GM12878 (cell line): ENCODE measurements at regions of chr6 and their contacts with region 1.

Region 1: GRCh38 chr6:130322673-130323268 is 43.0 kb upstream of the TMEM200A start:
- DNase-seq: peak; percentile 17
- ATAC-seq: peak; percentile 79
- H3K4me3 ChIP-seq: no peak overlapping the region
- H3K27ac ChIP-seq: no peak overlapping the region
- H3K4me1 ChIP-seq: no peaks in the 10 kb centered on the region
- H3K27me3 ChIP-seq: no peaks in the 10 kb centered on the region
- CTCF ChIP-seq: peak; percentile 78 to 93 (median 86); a peak in 5 of 6 replicates
- EP300 ChIP-seq: no peak
- POLR2A ChIP-seq: no peak
- RAD21 ChIP-seq: peak; percentile 95

Region 2: DNA sequence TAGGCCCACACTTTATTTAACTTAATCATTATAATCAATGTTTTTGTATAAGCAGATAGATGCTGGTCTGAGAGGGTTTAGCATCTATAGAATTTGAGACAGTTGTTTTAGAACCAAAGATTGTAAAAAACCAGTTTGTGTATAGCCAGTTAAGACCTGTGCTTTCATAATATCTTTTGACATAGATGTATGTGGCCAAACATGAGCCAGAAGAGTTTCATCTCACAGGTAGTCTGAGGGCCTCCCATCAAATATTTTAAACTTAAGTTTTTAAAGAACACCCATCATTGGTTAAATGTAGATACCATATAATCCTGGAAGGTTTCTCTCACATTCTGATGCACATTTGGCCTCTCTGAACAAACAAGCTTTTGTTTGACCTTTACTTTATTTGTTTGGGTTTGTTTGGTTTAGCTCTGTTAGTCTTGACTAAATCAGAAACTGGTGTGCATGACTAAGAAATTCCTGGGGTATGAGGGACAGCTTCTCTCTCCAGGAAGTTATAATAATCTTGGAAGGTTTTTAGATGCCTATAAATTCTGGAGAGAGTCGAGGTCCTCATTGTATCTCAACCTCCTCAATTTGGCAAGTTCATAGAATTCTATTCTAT is 14.9 kb before region 1 on chr6:
- CTCF ChIA-PET with region 1: interaction called, 10 read pairs
- POLR2A ChIA-PET with region 1: interaction called, 3 read pairs
- RAD21 ChIA-PET with region 1: interaction called, 5 read pairs
- SMC1A ChIA-PET with region 1: interaction called, 5 read pairs
- in situ Hi-C with region 1: no loop called
- intact Hi-C with region 1: no loop called
- DNase-seq: no peak
- ATAC-seq: no peak
- H3K4me3 ChIP-seq: no peak overlapping the region
- H3K27ac ChIP-seq: no peak overlapping the region
- H3K4me1 ChIP-seq: no peaks in the 10 kb centered on the region; the same call in 1 of the 2 replicates
- H3K27me3 ChIP-seq: no peaks in the 10 kb centered on the region
- CTCF ChIP-seq: no peak
- EP300 ChIP-seq: no peak
- POLR2A ChIP-seq: no peak
- RAD21 ChIP-seq: no peak

Region 3: DNA sequence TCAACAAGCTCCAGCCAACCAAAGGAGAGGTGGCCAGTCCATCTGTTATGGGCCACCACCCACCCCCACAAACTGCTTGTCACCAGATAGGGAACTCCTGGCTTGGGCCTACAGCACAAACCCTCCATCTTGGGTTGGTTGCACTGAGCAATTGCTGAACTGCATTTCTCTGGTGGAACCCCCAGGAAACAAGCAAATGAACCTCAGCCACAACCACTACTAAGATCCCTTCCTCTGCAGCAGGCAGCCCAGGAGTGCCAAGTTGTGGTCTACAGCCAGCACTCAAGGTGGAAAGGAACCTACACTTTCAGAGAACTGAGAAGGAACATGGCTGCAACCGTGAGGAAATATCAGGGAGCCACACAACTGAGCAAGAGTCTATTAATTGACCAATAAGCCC is 214.7 kb after region 1 on chr6:
- CTCF ChIA-PET with region 1: no interaction called
- POLR2A ChIA-PET with region 1: no interaction called
- RAD21 ChIA-PET with region 1: no interaction called
- SMC1A ChIA-PET with region 1: no interaction called
- in situ Hi-C with region 1: no loop called
- intact Hi-C with region 1: no loop called
- DNase-seq: no peak
- ATAC-seq: no peak
- H3K4me3 ChIP-seq: no peak overlapping the region
- H3K27ac ChIP-seq: no peak overlapping the region
- H3K4me1 ChIP-seq: no peaks in the 10 kb centered on the region
- H3K27me3 ChIP-seq: no peaks in the 10 kb centered on the region
- CTCF ChIP-seq: no peak
- EP300 ChIP-seq: no peak
- POLR2A ChIP-seq: no peak
- RAD21 ChIP-seq: no peak

Region 4: DNA sequence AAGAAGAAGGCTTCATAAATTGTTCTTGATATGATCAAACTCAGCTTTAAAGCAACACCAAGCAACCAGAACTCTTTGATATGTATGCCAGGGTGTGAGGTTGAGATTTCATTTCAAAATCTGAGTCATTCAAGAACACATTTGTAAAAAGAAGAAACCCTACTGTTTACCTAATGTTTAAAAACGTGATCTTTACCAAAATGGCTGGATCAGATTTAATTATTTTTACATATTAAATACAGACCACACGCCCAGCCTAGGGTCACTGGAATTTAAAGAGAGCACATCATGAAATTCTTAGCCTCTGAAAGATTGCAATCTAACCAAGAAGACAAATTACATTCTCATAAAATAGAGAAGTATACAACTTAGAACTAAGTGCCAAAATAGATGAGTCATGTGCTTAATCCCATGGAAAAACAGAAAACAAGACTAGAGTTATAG is 297.6 kb after region 1 on chr6:
- CTCF ChIA-PET with region 1: interaction called, 3 read pairs
- POLR2A ChIA-PET with region 1: no interaction called
- RAD21 ChIA-PET with region 1: no interaction called
- SMC1A ChIA-PET with region 1: interaction called, 3 read pairs
- in situ Hi-C with region 1: no loop called
- intact Hi-C with region 1: loop called (anchors 5 kb)
- DNase-seq: no peak
- ATAC-seq: peak; percentile 47
- H3K4me3 ChIP-seq: no peak overlapping the region
- H3K27ac ChIP-seq: no peak overlapping the region
- H3K4me1 ChIP-seq: peaks cover 3% of the 10 kb centered on the region; the same call in 1 of the 2 replicates
- H3K27me3 ChIP-seq: no peaks in the 10 kb centered on the region
- CTCF ChIP-seq: no peak
- EP300 ChIP-seq: no peak
- POLR2A ChIP-seq: no peak
- RAD21 ChIP-seq: no peak

Region 5: DNA sequence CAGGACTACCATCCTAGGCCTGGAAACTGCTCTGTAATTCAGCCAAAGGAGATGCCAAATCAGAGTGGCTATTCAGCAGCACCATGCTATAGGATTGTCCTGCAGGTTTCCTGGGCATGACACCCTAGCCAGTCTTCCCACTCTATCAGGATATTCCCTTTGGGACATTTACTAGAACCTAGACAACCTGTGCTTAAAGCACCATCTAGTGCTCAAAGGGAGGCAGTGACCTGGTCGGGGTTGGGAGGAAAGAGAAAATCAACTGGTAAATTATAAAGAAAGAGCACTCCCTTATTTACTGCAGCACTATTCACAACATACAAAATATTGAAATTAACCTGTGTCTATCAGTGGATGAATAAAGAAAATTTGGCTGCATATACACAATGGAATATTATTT is 437.2 kb after region 1 on chr6:
- CTCF ChIA-PET with region 1: interaction called, 4 read pairs
- POLR2A ChIA-PET with region 1: no interaction called
- RAD21 ChIA-PET with region 1: interaction called, 3 read pairs
- SMC1A ChIA-PET with region 1: interaction called, 3 read pairs
- in situ Hi-C with region 1: no loop called
- intact Hi-C with region 1: loop called (anchors 5 kb)
- DNase-seq: no peak
- ATAC-seq: peak; percentile 55; the same call in 2 of the 3 replicates
- H3K4me3 ChIP-seq: no peak overlapping the region
- H3K27ac ChIP-seq: no peak overlapping the region
- H3K4me1 ChIP-seq: no peaks in the 10 kb centered on the region
- H3K27me3 ChIP-seq: no peaks in the 10 kb centered on the region; a peak in 1 of 4 replicates
- CTCF ChIP-seq: peak; percentile 46 to 53 (median 49); a peak in 5 of 6 replicates
- EP300 ChIP-seq: no peak
- POLR2A ChIP-seq: no peak
- RAD21 ChIP-seq: peak; percentile 73

Region 6: DNA sequence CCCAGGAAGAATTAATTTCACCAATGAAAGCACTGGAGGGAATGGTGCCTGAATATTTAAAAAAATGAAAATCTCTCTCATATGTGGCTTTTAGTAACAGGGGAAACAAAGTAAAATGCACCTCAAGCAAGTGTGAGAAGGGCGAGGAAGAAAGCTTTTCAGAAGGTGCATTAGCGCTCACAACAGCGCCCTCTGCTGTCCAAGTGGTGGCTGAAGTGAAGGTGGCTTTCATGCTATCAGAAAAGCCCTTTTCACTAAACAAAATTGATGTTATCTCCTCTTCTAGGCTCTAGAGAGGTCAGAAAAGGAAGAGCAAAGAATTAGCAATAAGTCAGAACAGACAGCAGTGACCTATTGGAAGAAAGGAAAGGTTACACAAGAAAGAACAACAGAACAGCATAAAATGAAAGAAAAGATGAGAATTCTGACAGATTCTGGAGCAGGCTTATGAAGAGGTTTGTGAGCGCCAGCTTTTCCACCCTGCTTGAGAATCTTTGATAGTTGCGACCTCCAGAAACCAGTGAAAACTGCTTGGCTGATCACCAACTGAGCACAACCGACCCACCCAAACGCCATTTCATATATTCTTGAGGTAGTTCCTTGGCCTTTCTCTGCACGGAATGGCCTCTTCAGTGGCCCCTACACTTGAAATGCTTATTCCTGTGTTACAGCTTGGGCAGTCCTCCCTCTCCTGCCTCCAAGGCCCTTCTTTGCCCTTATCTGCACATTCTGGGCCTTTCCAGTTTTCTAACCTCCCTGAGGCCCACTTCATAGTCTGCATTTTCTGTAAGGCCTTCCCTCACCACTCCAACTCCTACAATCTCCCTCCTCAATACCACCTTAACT is 549.7 kb after region 1 on chr6:
- CTCF ChIA-PET with region 1: interaction called, 12 read pairs
- POLR2A ChIA-PET with region 1: no interaction called
- RAD21 ChIA-PET with region 1: interaction called, 9 read pairs
- SMC1A ChIA-PET with region 1: interaction called, 7 read pairs
- in situ Hi-C with region 1: no loop called
- intact Hi-C with region 1: loop called (anchors 2 kb)
- DNase-seq: no peak
- ATAC-seq: peak; percentile 93
- H3K4me3 ChIP-seq: no peak overlapping the region
- H3K27ac ChIP-seq: no peak overlapping the region
- H3K4me1 ChIP-seq: no peaks in the 10 kb centered on the region
- H3K27me3 ChIP-seq: no peaks in the 10 kb centered on the region
- CTCF ChIP-seq: peak; percentile 81 to 92 (median 90)
- EP300 ChIP-seq: no peak
- POLR2A ChIP-seq: no peak
- RAD21 ChIP-seq: peak; percentile 66